Activated CD4-positive, alpha-beta T cell treated with anti-CD3 and anti-CD28 coated beads, Interleukin-2, amount 10 ng/mL, durations not matched to agents 24 days and 14 days (primary cell): ENCODE measurements at regions of chr9 and their contacts with region 1.

Region 1: DNA sequence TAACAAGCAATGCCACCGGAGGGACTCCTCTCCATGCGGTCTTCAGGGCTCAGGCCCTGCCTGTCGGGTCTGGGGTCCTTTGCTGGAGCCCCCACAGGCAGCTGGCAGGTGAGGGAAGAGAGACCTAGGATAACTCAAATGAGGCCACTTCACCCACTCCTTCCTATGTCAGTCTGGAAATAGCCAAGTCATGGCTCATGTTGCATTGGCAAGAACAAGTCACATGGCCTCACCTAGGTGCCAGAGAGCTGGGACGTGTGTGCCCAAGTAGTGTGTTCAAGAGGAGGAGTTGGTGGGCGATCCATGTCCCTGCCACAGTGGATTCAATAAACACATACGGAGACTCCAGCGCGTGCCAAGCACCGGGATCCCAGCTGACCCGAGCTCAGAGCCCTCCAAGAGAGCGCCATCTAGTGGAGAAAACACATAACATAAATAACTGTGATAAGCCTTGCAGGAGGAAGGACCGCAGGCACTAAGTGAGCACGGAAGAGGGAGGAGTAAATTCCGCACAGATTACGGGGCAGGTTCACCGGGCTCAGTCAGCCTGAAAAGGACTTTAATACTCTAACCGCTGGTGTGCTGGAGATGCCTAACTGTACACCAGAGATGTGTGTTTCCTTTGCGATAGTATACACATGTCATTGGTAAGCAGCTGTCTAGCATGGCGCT is 580.8 kb downstream of the CCDC171 start:
- DNase-seq: peak; percentile 72
- H3K4me3 Mint-ChIP-seq: no peak overlapping the region
- H3K27ac Mint-ChIP-seq: no peak overlapping the region
- H3K4me1 Mint-ChIP-seq: peaks cover 3% of the 10 kb centered on the region
- H3K27me3 Mint-ChIP-seq: no peaks in the 10 kb centered on the region

Region 2: DNA sequence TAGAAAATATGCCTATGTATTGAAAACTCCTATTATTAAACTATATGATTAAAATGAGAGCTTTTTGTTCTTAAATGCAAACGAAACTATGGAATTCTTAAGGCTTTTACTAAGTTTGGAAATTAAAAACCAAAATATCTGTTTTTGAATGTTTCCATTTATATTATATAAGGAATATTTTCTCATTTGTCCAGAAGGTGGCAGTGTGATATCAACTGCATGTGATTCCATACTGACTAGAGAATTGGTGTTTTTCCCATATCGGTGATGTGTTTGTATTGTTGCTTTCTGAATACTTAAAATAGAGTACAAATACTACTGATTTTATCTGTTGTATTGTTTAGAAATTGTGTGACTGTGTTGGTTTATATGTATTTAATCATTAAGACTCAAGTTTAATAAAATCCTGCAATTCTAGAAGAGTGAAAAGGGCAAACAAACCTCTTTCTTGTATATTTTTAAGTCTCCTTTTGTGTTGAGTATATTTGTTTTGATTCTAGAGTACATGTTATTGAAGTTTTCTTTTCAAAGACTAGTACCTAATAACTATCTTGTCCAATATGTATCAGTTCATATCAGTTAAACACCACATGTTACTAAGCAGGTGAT is 260.0 kb before region 1 on chr9:
- intact Hi-C with region 1: loop called (anchors 2 kb)
- DNase-seq: no peak
- H3K4me3 Mint-ChIP-seq: no peak overlapping the region
- H3K27ac Mint-ChIP-seq: no peak overlapping the region
- H3K4me1 Mint-ChIP-seq: no peaks in the 10 kb centered on the region
- H3K27me3 Mint-ChIP-seq: no peaks in the 10 kb centered on the region

Region 3: GRCh38 chr9:16180546-16180945 is 46.9 kb after region 1 on chr9:
- intact Hi-C with region 1: no loop called
- DNase-seq: no peak
- H3K4me3 Mint-ChIP-seq: no peak overlapping the region
- H3K27ac Mint-ChIP-seq: no peak overlapping the region
- H3K4me1 Mint-ChIP-seq: no peaks in the 10 kb centered on the region
- H3K27me3 Mint-ChIP-seq: no peaks in the 10 kb centered on the region